ENCODE measurements at regions of chr19 and their contacts with region 1.

Region 1: DNA sequence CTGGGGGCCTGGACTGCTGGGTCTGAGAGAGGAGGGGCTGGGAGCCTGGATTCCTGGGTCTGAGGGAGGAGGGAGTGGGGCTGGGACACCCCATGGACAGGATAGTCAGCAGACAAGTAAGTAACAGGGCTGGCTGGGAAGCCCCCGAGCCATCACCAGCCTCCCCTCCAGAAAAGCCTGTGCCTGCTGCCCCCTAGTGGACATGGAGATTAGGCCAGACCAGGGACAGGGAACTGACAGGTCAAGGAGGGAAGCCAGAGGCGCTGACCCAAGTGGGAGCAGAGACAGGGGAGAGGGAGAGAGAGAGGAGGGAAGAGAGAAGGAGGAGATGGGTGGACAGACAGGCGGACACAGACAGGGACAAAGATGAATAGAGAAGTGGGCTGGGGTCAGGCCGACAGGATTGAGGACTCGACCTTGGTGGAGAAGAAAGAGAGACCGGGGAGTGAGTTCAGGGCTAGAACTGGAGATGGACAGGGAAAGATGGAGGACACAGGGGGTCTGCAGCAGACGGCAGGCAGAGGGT is 6.7 kb upstream of the ERFL start:
- DNase-seq: no peak
- H3K4me3 ChIP-seq: no peak overlapping the region
- CTCF ChIP-seq: peak; percentile 89

Region 2: DNA sequence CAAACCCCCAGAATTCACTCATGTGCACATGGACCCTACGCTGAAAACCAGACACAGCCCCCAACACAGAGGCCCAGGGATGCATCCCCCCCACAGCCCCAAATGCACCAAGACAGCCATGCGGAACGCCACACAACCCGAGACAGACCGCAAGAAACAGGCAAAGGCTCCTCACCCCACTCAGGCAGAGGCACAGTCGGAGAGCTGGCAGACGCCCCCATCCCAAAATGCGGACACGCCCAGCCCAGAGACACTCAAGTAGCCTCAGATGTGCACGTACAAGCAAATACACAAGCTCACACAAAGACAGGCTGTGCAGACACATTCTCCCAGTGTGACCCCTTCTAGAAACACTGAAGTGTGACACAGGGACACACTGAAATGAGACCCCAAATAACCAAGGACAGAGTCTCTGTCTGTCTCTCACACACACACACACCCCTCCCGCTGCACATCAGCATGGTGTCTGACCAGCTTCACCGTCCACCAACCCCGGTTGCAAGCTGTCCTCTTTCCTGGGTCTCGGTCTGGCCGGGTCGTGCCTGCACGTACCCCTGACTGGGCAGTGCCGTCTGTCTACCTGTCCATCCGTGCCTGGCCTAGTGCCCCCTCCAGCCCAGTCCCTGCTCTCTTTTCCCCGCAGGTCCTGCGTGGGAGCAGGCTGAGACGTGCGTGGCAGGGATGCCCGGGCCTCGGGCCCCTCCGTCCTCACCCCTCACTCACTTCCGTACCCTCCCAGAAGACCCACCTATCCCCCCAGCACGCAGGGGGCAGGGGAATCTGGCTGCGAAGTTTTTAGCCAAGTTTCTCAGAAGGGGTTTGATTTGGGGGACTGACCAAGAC is 22.8 kb before region 1 on chr19:
- CTCF ChIA-PET with region 1: no interaction called
- POLR2A ChIA-PET with region 1: no interaction called
- DNase-seq: no peak
- H3K4me3 ChIP-seq: no peak overlapping the region
- CTCF ChIP-seq: no peak

Region 3: GRCh38 chr19:41945135-41945766 is 10.3 kb after region 1 on chr19:
- CTCF ChIA-PET with region 1: interaction called, 21 read pairs
- POLR2A ChIA-PET with region 1: no interaction called
- DNase-seq: no peak
- H3K4me3 ChIP-seq: no peak overlapping the region
- CTCF ChIP-seq: no peak

Region 4: DNA sequence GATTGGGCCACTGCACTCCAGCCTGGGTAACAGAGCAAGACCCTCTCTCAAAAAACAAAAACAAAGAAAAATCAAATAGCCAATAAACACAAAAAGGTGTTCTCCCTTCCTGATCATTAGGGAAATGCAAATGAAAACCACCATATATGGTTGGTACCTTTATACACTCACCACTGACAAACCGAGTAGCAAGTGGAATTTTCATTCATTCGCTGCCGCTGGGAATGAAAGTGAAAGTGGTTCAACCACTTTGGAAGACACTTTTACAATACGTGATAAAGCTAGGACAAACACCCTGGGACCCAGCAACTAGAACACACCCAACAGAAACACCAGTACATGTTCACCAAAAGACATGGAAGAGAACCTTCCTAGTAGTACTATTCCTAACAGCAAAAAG is 114.1 kb after region 1 on chr19:
- CTCF ChIA-PET with region 1: no interaction called
- POLR2A ChIA-PET with region 1: no interaction called
- DNase-seq: no peak
- H3K4me3 ChIP-seq: no peak overlapping the region
- CTCF ChIP-seq: no peak